ENCODE measurements at regions of chr19 and their contacts with region 1.

Region 1: DNA sequence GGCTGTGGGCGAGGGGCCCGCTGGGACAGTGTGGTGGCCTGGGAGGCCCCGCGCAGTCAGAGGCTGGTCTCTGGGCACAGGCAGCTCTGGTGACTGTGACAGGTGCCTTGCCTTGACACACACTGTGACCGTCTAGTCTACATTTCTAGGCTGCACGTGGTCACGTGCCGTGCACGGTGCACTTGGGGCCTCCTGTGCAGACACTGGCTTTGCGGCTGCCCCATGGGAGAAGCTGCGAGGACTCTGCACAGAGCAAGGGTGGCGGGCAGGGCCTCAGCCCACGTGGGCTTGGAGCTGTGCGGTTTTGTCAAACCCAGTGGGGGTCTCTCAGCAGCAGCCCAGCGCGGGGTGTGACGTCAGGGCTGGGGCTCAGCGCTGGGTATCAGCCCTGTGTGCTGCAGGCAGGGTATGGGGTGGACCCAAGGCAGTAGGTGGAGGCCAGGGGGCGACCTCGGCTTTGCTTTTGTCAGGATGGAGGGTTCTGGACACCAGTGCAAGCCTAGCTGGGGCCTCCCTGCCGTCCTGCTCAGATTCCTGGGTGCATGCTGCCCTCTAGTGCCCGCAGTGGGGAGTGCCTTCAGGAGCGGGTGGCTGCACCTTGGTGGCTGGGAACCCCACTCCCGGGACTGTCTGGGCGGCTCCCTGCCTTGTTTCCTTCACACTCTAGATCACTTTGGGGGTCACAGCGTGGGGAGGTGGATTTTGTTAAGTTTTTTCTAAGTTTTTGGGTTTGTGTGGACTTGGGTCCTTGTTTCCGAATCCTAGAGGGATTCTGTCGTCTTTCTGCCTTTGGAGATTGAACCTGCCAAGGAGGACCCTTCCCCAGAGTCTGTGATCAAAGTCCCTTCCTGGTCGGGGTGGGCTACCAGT is 62.6 kb downstream of the KDM4B start:
- DNase-seq: peak; percentile 87
- H3K4me3 ChIP-seq: no peak overlapping the region
- H3K27ac ChIP-seq: no peak overlapping the region
- H3K4me1 ChIP-seq: no peaks in the 10 kb centered on the region
- H3K27me3 ChIP-seq: no peaks in the 10 kb centered on the region
- CTCF ChIP-seq: peak; percentile 96

Region 2: DNA sequence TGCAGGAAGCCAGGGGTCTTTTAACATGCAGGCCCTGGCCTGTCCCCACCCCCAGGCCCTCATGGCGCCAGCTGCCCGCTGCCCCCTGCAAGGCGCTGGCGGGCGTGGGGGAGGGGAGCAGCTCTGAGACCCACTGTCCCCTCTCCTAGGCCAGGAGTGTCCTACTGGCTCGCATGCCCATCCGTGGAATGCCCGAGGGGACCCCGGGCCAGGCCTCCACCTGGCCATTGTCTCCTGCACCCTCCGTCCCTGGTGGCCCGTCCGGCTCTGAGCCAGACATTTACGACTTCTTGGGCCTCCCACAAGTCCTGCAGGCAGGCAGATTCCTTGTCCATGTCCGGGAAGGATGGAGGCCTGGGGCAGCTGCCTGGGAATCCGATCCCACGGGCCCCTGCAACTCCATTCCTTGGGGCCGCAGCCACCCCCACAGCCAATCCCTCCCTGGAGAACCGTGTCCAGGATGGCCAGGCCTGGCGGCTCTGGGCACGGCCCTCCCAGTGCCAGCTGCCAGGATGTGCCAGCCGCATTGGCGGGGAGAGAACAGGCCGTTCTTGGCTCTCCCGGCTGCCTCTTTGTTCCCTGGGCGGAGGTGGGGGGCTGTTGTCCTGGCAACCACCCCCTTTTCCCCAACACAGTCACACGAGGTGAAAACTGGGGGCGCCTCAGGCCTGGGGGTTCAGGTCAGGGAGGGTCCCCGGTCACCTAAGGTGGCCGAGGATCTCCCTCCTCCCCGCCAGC is 153.5 kb before region 1 on chr19:
- intact Hi-C with region 1: loop called (anchors 2 kb)
- DNase-seq: no peak
- H3K4me3 ChIP-seq: no peak overlapping the region
- H3K27ac ChIP-seq: no peak overlapping the region
- H3K4me1 ChIP-seq: no peaks in the 10 kb centered on the region
- H3K27me3 ChIP-seq: no peaks in the 10 kb centered on the region
- CTCF ChIP-seq: no peak

Region 3: GRCh38 chr19:4896372-4896771 is 135.1 kb before region 1 on chr19:
- intact Hi-C with region 1: no loop called
- DNase-seq: no peak
- H3K4me3 ChIP-seq: no peak overlapping the region
- H3K27ac ChIP-seq: no peak overlapping the region
- H3K4me1 ChIP-seq: no peaks in the 10 kb centered on the region
- H3K27me3 ChIP-seq: no peaks in the 10 kb centered on the region
- CTCF ChIP-seq: no peak

Region 4: GRCh38 chr19:5128251-5128935 is 96.9 kb after region 1 on chr19:
- intact Hi-C with region 1: no loop called
- DNase-seq: no peak
- H3K4me3 ChIP-seq: no peak overlapping the region
- H3K27ac ChIP-seq: no peak overlapping the region
- H3K4me1 ChIP-seq: no peaks in the 10 kb centered on the region
- H3K27me3 ChIP-seq: no peaks in the 10 kb centered on the region
- CTCF ChIP-seq: no peak